Heart left ventricle (tissue), 16 donors: ENCODE measurements at regions of chrX and their contacts with region 1.

Region 1: GRCh38 chrX:66728818-66729271 is 90.0 kb upstream of the EDA2R start:
- DNase-seq: peak; percentile 16 to 41 (median 28)
- ATAC-seq: peak in 3 of 4 donors; percentile 74 to 94 (median 79)
- H3K4me3 ChIP-seq: peak overlapping the region in 10 of 12 donors; percentile 25 to 58 (median 46)
- H3K27ac ChIP-seq: no peak overlapping the region
- H3K4me1 ChIP-seq: no peaks in the 10 kb centered on the region
- H3K27me3 ChIP-seq: no peaks in the 10 kb centered on the region
- CTCF ChIP-seq: peak; percentile 34 to 68 (median 50)
- POLR2A ChIP-seq: no peak

Region 2: GRCh38 chrX:65575022-65575421 is 1153.8 kb before region 1 on chrX:
- intact Hi-C with region 1: loop called in 3 of 10 experiments (anchors 5 to 10 kb)
- DNase-seq: no peak
- ATAC-seq: no peak
- H3K4me3 ChIP-seq: no peak overlapping the region
- H3K27ac ChIP-seq: no peak overlapping the region
- H3K4me1 ChIP-seq: no peaks in the 10 kb centered on the region
- H3K27me3 ChIP-seq: peaks cover 0 to 38% (median 0%) of the 10 kb centered on the region in 9 donors
- CTCF ChIP-seq: no peak
- POLR2A ChIP-seq: no peak

Region 3: DNA sequence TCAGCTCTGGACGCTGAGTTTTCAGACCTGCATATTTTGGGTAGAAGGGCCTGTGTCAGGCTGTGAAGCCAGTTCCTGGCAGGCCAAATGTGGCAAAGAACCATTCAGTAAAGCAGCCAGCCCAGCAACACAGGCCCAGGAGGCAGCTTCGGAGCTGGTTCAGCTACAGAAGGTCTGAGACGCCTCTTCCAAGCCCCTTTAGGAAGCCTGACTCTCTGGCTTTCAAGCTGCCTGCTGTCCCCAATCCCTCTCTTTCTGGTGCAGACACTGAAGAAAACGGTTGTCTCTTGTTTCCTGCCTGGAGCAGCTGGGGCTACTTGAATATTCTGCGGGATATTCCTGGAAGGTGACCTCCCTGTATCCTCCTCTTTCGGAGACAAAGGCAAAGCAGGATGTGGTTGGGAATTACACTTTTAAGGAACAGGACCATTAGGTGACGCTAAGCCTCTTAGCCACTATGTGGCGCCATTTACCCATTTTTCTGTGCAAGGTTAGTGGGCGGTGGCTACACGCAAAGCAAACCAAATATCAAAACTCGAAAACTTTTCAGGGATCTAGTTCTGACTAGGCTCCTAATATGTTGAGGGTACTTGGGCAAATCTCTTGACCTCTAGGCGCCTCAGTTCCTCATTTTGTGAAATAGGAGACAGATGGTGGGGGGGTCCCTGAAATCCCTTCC is 1147.0 kb before region 1 on chrX:
- intact Hi-C with region 1: loop called in 4 of 10 experiments (anchors 5 to 10 kb)
- DNase-seq: peak in 4 of 5 donors; percentile 29 to 50 (median 47)
- ATAC-seq: peak; percentile 61 to 89 (median 84)
- H3K4me3 ChIP-seq: no peak overlapping the region
- H3K27ac ChIP-seq: no peak overlapping the region
- H3K4me1 ChIP-seq: no peaks in the 10 kb centered on the region
- H3K27me3 ChIP-seq: peaks cover 0 to 38% (median 0%) of the 10 kb centered on the region in 9 donors
- CTCF ChIP-seq: peak; percentile 50 to 87 (median 72)
- POLR2A ChIP-seq: no peak

Region 4: DNA sequence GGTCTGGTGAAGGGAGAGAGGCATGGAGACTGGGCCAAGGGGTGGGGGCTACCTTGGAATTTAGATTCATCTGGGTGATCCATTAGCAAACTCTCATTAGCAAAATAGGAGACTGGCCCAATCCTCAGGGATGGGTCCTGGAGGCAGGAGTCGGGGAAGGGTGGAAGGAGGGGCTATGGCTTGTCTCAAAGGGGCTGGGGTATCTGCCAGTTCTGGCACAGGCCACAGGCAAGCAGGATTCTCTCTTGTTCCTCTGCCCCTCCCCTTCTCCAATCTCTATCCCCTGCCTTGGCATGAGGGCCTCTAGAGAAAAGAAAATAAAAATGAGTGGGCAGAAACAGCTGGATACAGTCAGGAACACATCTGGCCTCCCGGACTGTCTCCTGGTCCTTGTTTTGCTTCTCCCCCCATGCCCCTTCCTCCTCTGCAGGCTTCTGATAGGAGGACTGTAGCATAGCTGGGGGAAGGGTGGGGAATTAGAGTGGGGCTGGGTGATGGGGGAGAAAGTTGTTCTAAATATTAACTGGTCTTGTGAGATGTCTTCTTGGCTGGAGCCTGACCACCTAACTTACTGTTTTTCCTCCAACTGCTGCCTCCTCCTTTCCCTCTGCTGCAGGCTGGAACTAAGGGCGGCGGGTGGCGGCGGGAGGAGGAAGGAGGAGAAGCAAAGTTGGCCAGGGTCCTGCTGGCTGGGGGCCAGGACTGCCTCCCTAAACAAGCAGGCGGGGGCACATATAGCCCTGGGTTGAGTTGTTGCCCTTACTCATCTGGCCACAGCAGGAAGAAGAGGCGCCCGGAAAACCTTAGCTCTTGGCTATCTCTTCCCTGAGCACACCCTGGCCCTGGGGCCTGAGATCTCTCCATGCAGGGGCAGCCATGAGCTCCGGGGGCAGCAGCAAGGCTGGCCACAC is 1141.0 kb before region 1 on chrX:
- intact Hi-C with region 1: loop called in 3 of 10 experiments (anchors 5 to 10 kb)
- DNase-seq: peak; percentile 65 to 85 (median 73)
- ATAC-seq: peak; percentile 65 to 87 (median 78)
- H3K4me3 ChIP-seq: peak overlapping the region in 7 of 12 donors; percentile 14 to 38 (median 33)
- H3K27ac ChIP-seq: peak overlapping the region in 7 of 12 donors; percentile 22 to 72 (median 52)
- H3K4me1 ChIP-seq: peaks cover 0 to 10% (median 0%) of the 10 kb centered on the region in 12 donors
- H3K27me3 ChIP-seq: peaks cover 0 to 27% (median 0%) of the 10 kb centered on the region in 9 donors
- CTCF ChIP-seq: no peak
- POLR2A ChIP-seq: no peak

Region 5: DNA sequence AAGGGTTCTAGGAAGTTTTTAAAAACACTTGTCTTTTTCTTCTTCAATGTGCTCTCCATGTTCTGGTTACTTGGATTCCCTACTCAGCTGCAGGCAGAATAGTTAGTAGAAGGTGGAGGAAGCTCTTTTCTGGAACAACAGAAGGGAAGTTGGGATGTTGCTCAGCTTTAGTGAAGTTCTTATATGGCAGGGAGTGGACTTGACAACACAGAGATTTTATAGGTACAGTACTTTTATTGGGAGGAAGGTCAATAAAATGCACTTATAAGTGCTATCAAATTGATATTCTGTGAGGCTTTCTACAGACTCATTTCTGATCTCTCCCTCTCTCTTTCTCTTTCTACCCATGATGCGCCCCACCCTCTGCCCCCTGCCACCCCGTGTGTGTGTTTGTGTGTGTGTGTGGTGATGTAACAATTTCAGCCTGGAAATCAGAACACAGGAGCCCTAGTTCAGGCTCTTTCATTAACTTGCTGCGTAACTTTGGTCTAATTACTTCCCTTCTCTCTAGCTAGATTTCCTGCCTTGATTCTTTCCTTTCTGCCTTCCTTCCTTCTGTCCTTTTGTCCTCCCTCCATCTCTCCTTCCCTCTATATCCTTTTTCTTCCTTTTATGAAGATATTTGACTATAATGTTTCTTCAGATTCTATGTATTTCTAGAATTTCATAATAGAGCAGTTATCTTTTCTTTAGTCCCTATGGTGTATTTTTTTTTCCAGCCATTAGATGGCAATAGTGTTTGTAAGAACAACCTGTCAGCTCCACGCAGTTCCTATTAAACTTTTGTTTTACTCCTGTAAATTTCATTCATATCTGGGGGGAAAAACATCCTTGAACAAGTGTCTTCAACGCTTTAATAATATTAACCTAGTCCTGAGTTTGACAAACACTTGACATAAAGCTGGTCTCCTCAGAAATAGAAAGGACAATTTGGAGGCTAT is 527.7 kb before region 1 on chrX:
- intact Hi-C with region 1: loop called in 2 of 10 experiments (anchors 5 to 10 kb)
- DNase-seq: no peak
- ATAC-seq: no peak
- H3K4me3 ChIP-seq: no peak overlapping the region
- H3K27ac ChIP-seq: no peak overlapping the region
- H3K4me1 ChIP-seq: no peaks in the 10 kb centered on the region
- H3K27me3 ChIP-seq: peaks cover 0 to 40% (median 0%) of the 10 kb centered on the region in 9 donors
- CTCF ChIP-seq: peak in 7 of 12 donors; percentile 12 to 39 (median 31)
- POLR2A ChIP-seq: no peak

Region 6: DNA sequence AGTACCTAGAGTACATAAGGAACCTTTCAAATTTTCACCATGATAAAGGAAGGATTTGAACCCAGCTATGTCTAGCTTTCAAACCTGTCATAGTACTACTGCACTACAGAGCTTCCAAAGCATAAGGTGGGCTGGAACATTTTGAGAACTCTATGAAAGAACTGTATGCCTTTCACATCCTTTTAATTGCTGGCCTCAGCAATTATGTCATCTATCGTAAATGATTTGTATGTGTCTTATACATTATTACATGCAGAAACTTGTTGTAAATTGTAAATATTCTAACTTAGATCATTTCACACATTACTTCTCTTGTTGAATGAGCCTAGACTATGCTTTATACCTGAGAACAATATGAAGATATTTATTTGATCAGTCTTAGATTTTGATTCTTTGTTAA is 344.1 kb before region 1 on chrX:
- intact Hi-C with region 1: no loop called
- DNase-seq: no peak
- ATAC-seq: no peak
- H3K4me3 ChIP-seq: no peak overlapping the region
- H3K27ac ChIP-seq: no peak overlapping the region
- H3K4me1 ChIP-seq: no peaks in the 10 kb centered on the region
- H3K27me3 ChIP-seq: peaks cover 0 to 3% (median 0%) of the 10 kb centered on the region in 9 donors
- CTCF ChIP-seq: no peak
- POLR2A ChIP-seq: no peak